GM13976 (cell line): ENCODE measurements at regions of chr4 and their contacts with region 1.

Region 1: DNA sequence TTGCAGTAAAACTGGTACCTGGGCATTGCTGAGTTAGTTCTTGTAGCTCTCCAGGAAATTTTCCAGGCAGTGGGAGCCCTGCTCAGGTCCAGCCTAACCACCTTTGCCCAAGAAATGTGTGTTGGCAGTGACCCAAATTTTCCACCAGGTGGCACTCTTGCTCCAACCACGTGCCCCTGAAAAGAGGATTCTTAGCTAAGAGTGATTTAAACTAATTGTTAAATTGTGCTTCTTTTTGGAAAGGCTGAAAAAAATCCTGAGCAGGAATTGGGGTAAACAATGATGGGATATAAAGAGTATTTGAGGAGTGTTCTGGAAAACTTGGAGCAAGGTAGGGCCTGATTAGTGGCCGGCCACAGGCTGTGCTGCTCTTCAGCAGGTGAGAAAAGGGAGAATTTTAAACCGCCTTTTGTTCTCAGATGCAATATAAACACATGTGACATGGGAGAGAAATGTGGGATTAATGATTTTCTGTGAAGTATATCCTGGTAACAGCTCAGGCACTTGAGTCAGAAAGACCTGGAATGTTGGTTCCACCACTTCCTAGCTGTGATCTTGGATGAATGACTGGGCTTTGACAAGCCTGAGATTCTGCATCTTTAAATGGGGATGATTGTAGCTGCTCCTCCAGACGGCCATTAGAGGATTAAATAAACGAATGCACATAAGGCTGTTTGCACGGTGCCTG is 219.6 kb downstream of the PTTG2 start:
- DNase-seq: peak; percentile 65
- CTCF ChIP-seq: peak; percentile 81

Region 2: GRCh38 chr4:38062088-38062893 is 117.5 kb before region 1 on chr4:
- in situ Hi-C with region 1: loop called (anchors 10 kb)
- DNase-seq: peak; percentile 73
- CTCF ChIP-seq: peak; percentile 65

Region 3: DNA sequence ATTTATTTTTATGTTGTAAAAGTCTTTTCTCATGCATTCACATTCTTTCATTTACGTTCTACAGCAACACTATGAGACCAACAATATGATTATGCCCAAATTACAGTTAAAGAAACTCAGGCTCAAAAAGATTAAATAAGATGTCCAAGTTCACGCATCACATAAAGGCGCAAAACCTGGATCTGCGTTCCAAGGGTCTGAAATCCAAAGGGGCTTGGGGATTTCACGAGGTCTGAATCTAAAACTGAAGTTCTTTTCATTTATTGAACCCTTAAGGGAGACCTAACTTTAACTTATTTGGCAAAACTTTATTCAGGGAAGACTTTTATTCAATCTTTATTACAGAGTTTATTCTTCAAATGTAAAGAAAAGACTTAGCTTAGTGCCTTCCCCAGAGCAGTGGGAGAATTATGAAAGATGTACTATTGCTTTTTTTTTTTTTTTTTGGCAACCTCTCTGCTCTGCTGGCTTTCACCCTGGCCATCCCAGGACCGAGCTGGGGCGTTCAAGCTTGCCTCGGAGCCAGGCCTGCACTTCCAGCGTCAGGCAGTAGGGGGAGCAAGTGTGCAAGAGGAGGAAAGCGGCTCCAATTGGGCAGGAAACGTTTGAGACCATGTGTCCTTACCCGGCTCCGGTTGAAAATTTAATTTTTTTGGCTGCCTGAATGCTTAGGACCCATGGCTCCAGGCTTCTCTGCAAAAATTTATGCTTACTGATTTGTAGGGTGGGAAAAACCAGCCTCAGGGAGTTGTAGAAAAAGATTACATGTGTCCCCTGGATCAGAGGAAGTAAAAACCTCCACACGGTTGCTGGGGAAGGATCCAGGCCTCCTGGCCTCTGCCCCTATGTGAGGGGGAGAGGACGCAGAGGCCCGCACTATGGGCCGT is 139.9 kb after region 1 on chr4:
- in situ Hi-C with region 1: loop called (anchors 5 kb)
- DNase-seq: peak; percentile 84
- CTCF ChIP-seq: peak; percentile 99

Region 4: DNA sequence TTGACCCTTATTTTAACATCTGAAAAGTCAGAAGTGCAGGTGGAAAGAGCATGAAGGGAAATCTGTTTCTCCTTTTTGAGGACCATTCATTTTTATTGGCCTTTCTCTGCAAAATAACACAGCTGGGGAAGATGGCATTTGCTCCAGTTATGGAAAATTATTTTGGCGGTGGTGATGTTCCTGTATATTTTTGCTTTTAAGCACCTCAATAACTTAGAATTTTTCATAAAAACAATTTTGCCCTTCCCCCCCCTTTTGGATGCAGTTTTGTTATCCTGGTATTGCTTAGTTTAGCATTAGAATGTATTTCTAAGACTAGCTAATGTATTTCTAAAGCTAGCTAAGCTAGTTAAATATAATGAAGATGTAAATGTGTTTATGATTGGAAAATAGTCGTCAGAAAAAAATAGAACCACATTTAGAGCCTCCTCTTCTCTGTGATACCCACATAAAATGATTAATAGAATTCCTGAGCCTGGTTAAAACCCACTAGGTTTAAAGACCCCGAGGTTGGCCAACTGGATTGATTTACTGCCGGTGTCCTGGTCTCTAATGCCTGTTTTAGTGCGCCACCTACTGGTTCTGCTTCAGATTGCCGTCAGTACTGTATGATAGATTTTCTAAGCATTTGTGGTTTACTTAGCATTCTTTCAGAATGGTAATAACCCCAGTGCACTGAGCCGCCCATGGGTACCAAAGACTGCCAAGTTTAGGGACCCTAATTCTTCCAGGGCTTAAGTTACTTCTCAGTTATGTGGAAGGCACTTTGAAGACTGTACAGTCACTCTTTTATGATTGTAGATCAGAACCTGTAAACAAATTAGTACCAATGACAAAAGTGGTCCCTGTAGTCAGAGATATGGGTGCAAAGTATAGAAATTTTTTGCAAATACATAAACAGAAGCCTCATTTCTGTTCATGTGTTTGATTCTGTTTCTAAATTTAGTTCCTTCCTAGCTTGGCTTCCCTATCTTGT is 495.6 kb after region 1 on chr4:
- in situ Hi-C with region 1: loop called (anchors 5 kb)
- DNase-seq: peak; percentile 70
- CTCF ChIP-seq: peak; percentile 77

Region 5: GRCh38 chr4:38730830-38731646 is 551.2 kb after region 1 on chr4:
- in situ Hi-C with region 1: loop called (anchors 5 kb)
- DNase-seq: peak; percentile 80
- CTCF ChIP-seq: peak; percentile 78